ENCODE measurements at regions of chr7 and their contacts with region 1.

Region 1: DNA sequence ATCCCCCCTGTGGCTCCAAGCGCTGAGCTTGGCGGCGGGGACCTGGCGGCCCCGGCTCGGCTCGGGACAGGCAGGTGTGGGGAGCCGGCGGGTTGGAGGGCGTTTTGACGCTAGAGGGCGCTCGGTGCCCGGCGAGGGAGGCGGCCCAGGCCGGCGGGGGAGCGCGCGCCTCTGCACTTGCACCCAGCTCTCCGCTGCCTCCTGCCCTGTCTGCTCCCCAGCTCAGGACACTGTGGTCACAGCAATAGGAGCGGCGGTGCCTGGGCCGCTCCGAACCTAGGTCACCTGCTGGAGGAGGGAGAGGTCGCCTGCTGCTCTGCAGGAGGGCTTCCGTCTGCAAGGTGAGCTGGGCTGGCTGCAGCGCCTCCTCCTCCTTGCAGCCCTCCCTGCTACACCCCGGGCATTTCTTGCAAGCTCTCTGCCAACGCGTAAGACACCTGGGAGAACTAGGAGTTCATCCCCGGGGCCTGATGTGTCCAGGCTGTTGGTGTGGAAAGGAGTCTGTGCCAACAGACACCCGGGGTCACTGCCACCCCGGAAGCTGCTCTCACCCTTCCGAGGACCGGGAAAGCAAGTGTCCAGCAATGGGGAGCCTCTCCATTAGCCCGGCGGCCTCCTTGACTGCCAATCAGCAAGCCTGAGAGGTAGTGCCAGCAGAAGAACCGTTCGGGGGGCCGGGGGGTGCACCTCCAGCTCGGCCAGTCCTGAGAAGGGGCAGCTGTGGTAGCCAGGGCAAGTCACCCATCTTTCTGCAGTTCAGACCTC is 620.4 kb downstream of the GALNT17 start:
- DNase-seq: peak; percentile 70 to 81 (median 77)
- ATAC-seq: peak; percentile 100
- H3K4me3 ChIP-seq: no peak overlapping the region
- H3K27ac ChIP-seq: no peak overlapping the region
- H3K4me1 ChIP-seq: peaks cover 0 to 9% of the 10 kb centered on the region in 2 experiments; a peak in 1 of 5 replicates
- H3K27me3 ChIP-seq: 0 out of 5 replicates have a peak, but pooled peaks cover 0 to 4% of the 10 kb centered on the region in 2 experiments
- CTCF ChIP-seq: peak; percentile 75 to 86 (median 82)
- EP300 ChIP-seq: no peak
- POLR2A ChIP-seq: no peak
- RAD21 ChIP-seq: peak; percentile 65 to 88

Region 2: GRCh38 chr7:71860572-71860971 is 108.2 kb after region 1 on chr7:
- CTCF ChIA-PET with region 1: no interaction called
- POLR2A ChIA-PET with region 1: no interaction called
- in situ Hi-C with region 1: no loop called
- intact Hi-C with region 1: no loop called
- DNase-seq: no peak
- ATAC-seq: no peak
- H3K4me3 ChIP-seq: no peak overlapping the region
- H3K27ac ChIP-seq: no peak overlapping the region
- H3K4me1 ChIP-seq: no peaks in the 10 kb centered on the region; a peak in 1 of 5 replicates
- H3K27me3 ChIP-seq: no peaks in the 10 kb centered on the region; a peak in 1 of 5 replicates
- CTCF ChIP-seq: no peak
- EP300 ChIP-seq: no peak
- POLR2A ChIP-seq: no peak
- RAD21 ChIP-seq: no peak

Region 3: GRCh38 chr7:72334066-72334465 is 581.7 kb after region 1 on chr7:
- CTCF ChIA-PET with region 1: no interaction called
- POLR2A ChIA-PET with region 1: no interaction called
- in situ Hi-C with region 1: no loop called
- intact Hi-C with region 1: loop called (anchors 10 kb)
- DNase-seq: peak; percentile 23 to 42 (median 24)
- ATAC-seq: peak; percentile 80
- H3K4me3 ChIP-seq: no peak overlapping the region
- H3K27ac ChIP-seq: no peak overlapping the region
- H3K4me1 ChIP-seq: peaks cover 0 to 22% of the 10 kb centered on the region in 2 experiments; a peak in 1 of 5 replicates
- H3K27me3 ChIP-seq: peaks cover 2 to 21% of the 10 kb centered on the region in 2 experiments; a peak in 4 of 5 replicates
- CTCF ChIP-seq: peak; percentile 50 to 60 (median 53); a peak in 5 of 6 replicates
- EP300 ChIP-seq: no peak
- POLR2A ChIP-seq: no peak
- RAD21 ChIP-seq: peak in 1 of 2 experiments; percentile 39; a peak in 2 of 4 replicates

Region 4: GRCh38 chr7:72453250-72453870 is 701.0 kb after region 1 on chr7:
- CTCF ChIA-PET with region 1: no interaction called
- POLR2A ChIA-PET with region 1: no interaction called
- in situ Hi-C with region 1: no loop called
- intact Hi-C with region 1: no loop called
- DNase-seq: no peak
- ATAC-seq: no peak
- H3K4me3 ChIP-seq: no peak overlapping the region
- H3K27ac ChIP-seq: no peak overlapping the region
- H3K4me1 ChIP-seq: no peaks in the 10 kb centered on the region
- H3K27me3 ChIP-seq: peaks cover 2 to 12% of the 10 kb centered on the region in 2 experiments; a peak in 3 of 5 replicates
- CTCF ChIP-seq: no peak
- EP300 ChIP-seq: no peak
- POLR2A ChIP-seq: no peak
- RAD21 ChIP-seq: no peak

Region 5: DNA sequence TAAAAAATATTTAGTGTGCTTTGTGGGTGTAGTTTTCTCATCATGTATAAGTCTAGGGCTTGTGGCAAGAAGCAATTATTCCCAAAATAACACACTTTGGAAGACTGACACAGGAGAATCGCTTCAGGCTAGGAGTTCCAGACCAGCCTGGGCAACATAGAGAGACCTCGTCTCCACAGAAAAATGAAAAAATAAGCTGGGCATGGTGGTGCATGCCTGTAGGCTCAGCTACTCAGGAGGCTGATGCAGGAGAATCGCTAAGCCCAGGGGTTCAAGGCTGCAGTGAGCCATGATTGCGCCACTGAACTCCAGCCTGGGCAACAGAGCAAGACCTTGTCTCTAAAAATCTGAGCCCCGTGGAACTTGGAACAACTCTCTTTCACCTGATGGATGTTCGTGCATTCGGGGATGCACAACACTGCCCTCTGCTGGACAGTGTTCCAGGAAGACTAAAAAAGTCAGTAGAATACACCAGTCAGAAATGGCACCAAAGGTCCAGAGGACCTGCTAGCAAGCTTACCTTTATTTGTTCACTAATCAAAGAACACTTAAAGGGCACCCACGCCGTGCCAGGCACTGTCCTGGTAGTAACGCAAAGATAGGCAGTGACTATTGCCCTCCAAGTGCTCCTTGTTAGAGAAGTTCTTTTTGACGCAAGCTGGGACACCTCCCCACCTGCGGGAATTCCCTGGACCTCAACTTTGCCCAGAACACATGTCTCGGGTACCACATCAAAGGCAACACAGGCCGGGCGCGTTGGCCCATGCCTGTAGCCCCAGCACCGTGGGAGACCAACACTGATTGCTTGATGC is 741.7 kb after region 1 on chr7:
- CTCF ChIA-PET with region 1: interaction called, 3 read pairs
- POLR2A ChIA-PET with region 1: no interaction called
- in situ Hi-C with region 1: no loop called
- intact Hi-C with region 1: loop called (anchors 5 kb)
- DNase-seq: peak; percentile 56 to 79 (median 60)
- ATAC-seq: peak; percentile 86
- H3K4me3 ChIP-seq: no peak overlapping the region
- H3K27ac ChIP-seq: no peak overlapping the region
- H3K4me1 ChIP-seq: no peaks in the 10 kb centered on the region
- H3K27me3 ChIP-seq: peaks cover 4 to 6% of the 10 kb centered on the region in 2 experiments; a peak in 3 of 5 replicates
- CTCF ChIP-seq: peak; percentile 63 to 80 (median 78)
- EP300 ChIP-seq: no peak
- POLR2A ChIP-seq: no peak
- RAD21 ChIP-seq: peak; percentile 41 to 78

Measured in K562 (cell line).